Activated CD4-positive, alpha-beta T cell treated with anti-CD3 and anti-CD28 coated beads for 36 hours (primary cell): ENCODE measurements at regions of chr2 and their contacts with region 1.

Region 1: DNA sequence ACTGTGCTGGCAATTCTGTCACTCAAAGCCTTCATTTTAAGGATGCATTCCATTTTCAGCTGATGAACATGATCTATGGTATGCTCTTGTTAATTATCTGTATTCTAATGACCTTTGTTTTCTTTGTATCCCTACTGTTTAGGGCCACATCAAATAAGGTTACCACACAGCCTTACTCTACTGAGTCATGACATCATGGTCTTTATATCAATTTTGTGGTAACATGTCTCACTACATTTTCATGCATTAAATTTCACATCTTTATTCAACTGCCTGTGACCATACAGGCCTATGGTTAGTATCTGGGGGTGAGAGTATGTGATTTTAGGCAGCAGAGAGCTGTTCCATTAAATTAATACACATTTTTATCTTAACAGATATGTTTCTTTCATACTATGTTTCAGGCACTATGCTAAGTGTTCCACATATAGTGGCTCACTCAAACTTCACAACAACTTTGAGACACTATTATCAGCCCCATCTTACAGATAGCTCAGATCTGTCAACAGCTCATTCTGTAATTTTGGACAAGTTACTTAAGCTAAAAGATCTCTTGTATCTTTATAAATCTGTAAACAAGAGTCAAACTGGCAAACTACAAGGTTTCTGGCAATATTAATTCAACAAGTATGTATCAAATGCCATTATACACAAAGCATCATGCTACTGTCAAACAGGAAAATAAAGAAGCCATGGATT is 18.0 kb downstream of the LRPPRC start:
- DNase-seq: no peak
- ATAC-seq: no peak
- H3K4me3 Mint-ChIP-seq: no peak overlapping the region
- H3K27ac Mint-ChIP-seq: peak overlapping the region; percentile 32
- H3K4me1 Mint-ChIP-seq: peaks cover 12% of the 10 kb centered on the region
- H3K27me3 Mint-ChIP-seq: no peaks in the 10 kb centered on the region

Region 2: GRCh38 chr2:43898134-43898837 is 79.5 kb before region 1 on chr2:
- CTCF ChIA-PET with region 1: no interaction called
- POLR2A ChIA-PET with region 1: no interaction called
- intact Hi-C with region 1: loop called in 1 of 2 experiments (anchors 5 kb)
- DNase-seq: peak; percentile 30
- ATAC-seq: no peak
- H3K4me3 Mint-ChIP-seq: no peak overlapping the region
- H3K27ac Mint-ChIP-seq: peak overlapping the region; percentile 19
- H3K4me1 Mint-ChIP-seq: no peaks in the 10 kb centered on the region
- H3K27me3 Mint-ChIP-seq: no peaks in the 10 kb centered on the region

Region 3: GRCh38 chr2:43905371-43905803 is 72.4 kb before region 1 on chr2:
- CTCF ChIA-PET with region 1: no interaction called
- POLR2A ChIA-PET with region 1: no interaction called
- intact Hi-C with region 1: loop called in 1 of 2 experiments (anchors 5 kb)
- DNase-seq: no peak
- ATAC-seq: peak; percentile 63
- H3K4me3 Mint-ChIP-seq: no peak overlapping the region
- H3K27ac Mint-ChIP-seq: no peak overlapping the region
- H3K4me1 Mint-ChIP-seq: peaks cover 15% of the 10 kb centered on the region
- H3K27me3 Mint-ChIP-seq: no peaks in the 10 kb centered on the region

Region 4: GRCh38 chr2:43944915-43945314 is 32.9 kb before region 1 on chr2:
- CTCF ChIA-PET with region 1: no interaction called
- POLR2A ChIA-PET with region 1: no interaction called
- intact Hi-C with region 1: loop called (anchors 2 to 5 kb)
- DNase-seq: no peak
- ATAC-seq: no peak
- H3K4me3 Mint-ChIP-seq: no peak overlapping the region
- H3K27ac Mint-ChIP-seq: no peak overlapping the region
- H3K4me1 Mint-ChIP-seq: no peaks in the 10 kb centered on the region
- H3K27me3 Mint-ChIP-seq: no peaks in the 10 kb centered on the region

Region 5: DNA sequence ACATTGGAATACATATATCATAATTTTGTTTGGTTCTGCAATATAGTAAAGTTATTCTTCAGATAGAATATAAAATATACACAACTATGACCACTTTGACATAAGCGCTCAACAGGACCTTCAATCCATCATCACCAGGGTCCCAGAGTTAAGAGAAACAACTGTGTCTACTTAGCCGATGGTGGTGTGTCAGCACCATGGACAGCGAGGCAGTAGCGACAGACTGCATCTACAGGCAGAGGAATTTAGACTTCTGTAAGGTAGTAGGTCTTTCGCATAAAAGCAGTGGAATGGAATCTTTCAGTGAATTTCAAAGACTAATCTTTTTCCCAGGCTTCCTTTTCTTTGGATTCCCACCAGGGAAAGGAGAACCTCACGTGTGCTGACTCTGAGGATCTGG is 38.5 kb after region 1 on chr2:
- CTCF ChIA-PET with region 1: no interaction called
- POLR2A ChIA-PET with region 1: no interaction called
- intact Hi-C with region 1: no loop called
- DNase-seq: peak; percentile 70
- ATAC-seq: no peak
- H3K4me3 Mint-ChIP-seq: no peak overlapping the region
- H3K27ac Mint-ChIP-seq: no peak overlapping the region
- H3K4me1 Mint-ChIP-seq: no peaks in the 10 kb centered on the region
- H3K27me3 Mint-ChIP-seq: peaks cover 17% of the 10 kb centered on the region